PC-9 (cell line): ENCODE measurements at regions of chr2 and their contacts with region 1.

Region 1: DNA sequence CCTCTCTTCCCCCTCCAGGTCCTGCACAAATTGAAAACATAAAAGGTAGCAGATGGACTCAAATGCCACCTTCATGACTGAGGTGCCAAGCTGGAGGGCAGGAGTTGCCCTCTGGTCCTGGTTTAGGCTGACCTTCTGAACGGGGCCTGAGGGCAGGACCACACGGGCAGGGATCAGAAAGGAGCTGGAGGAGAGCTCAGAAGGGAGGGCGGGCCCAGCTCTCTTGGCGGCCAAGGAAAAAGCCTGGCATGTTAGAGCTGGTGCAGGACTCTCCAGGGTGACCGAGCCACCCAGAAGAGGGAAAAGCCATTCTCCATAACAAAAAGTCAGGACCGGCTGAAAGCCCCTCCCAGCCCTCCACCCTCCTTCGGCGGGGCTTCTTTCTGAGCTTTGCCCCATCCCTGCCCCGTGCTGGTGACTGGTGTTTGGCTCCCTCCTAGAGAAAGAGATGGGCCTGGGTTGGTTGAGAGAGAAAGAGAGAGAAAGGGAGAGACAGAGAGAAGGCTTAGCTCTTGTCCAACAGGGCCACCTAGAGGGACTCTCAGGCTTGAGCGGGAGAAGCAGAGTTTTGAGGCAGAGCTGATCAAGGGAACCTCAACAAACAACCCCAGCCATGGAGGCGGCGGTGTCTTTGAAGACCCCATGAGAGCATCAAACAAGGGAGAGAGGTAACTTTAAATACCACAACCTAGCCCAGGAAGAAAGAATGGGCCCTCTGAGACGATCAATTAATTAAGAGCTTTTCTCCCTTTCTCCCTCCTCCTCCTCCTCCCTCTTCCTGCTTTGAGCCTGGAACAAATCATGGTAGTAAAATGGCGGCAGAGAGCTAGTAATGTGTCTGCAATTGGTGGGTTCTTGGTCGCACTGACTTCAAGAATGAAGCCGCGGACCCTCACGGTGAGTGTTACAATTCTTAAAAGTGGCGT is 50.8 kb downstream of the WIPF1 start:
- DNase-seq: peak; percentile 74 to 79
- H3K4me3 ChIP-seq: peak overlapping the region; percentile 58
- H3K27ac ChIP-seq: no peak overlapping the region
- H3K4me1 ChIP-seq: 0 out of 2 replicates have a peak, but pooled peaks cover 4% of the 10 kb centered on the region
- H3K27me3 ChIP-seq: 0 out of 2 replicates have a peak, but pooled peaks cover 5% of the 10 kb centered on the region
- CTCF ChIP-seq: peak; percentile 80

Region 2: DNA sequence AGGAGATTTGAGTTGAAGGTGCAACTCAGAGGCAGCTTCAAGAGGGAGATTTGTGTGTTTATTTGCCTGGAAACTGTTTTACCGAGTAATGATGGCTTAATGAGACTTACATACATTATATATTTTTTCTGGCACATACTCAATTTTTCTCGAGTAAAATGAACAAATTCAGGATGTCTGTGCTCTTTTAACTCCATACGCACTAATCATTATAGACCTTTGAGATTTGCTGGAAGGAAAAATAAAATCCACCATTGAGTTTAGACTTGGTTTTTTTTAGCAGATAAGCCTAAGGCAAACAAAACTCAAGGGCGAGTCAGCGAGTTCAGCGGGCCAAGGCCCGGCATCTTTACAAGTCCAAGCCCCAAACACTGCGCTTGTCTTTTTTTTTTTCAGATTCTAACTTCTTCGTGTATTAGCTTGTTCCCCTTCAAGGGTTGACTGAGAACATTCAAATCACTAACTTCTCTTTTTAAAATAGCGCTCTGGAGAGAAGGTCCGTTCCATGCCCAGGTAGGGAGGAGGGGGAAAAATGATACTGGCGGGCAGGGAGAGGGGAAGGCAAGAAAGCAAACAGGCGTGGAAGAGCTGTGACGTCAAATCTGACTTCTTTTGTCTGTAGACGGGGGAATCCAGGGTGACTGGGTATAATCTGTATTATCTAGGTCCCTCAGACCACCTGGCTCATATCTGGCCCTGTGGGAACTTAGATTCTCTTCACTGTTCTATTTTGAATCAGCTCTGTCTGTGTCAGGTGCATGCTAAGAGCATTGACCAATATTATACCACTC is 1543.9 kb before region 1 on chr2:
- CTCF ChIA-PET with region 1: interaction called, 10 read pairs
- POLR2A ChIA-PET with region 1: interaction called, 6 read pairs
- intact Hi-C with region 1: no loop called
- DNase-seq: no peak
- H3K4me3 ChIP-seq: no peak overlapping the region
- H3K27ac ChIP-seq: no peak overlapping the region
- H3K4me1 ChIP-seq: peaks cover 49% of the 10 kb centered on the region
- H3K27me3 ChIP-seq: no peaks in the 10 kb centered on the region
- CTCF ChIP-seq: no peak

Region 3: GRCh38 chr2:174465327-174465726 is 81.5 kb before region 1 on chr2:
- CTCF ChIA-PET with region 1: interaction called, 89 read pairs
- POLR2A ChIA-PET with region 1: interaction called, 5 read pairs
- intact Hi-C with region 1: loop called (anchors 1 kb)
- DNase-seq: no peak
- H3K4me3 ChIP-seq: no peak overlapping the region
- H3K27ac ChIP-seq: no peak overlapping the region
- H3K4me1 ChIP-seq: no peaks in the 10 kb centered on the region
- H3K27me3 ChIP-seq: no peaks in the 10 kb centered on the region
- CTCF ChIP-seq: no peak

Region 4: GRCh38 chr2:174536304-174536703 is 10.5 kb before region 1 on chr2:
- CTCF ChIA-PET with region 1: no interaction called
- POLR2A ChIA-PET with region 1: interaction called, 15 read pairs
- intact Hi-C with region 1: no loop called
- DNase-seq: peak in 1 of 2 experiments; percentile 13
- H3K4me3 ChIP-seq: no peak overlapping the region
- H3K27ac ChIP-seq: no peak overlapping the region
- H3K4me1 ChIP-seq: no peaks in the 10 kb centered on the region
- H3K27me3 ChIP-seq: no peaks in the 10 kb centered on the region
- CTCF ChIP-seq: no peak

Region 5: GRCh38 chr2:175326801-175327200 is 780.0 kb after region 1 on chr2:
- CTCF ChIA-PET with region 1: interaction called, 12 read pairs
- POLR2A ChIA-PET with region 1: no interaction called
- intact Hi-C with region 1: no loop called
- DNase-seq: no peak
- H3K4me3 ChIP-seq: no peak overlapping the region
- H3K27ac ChIP-seq: no peak overlapping the region
- H3K4me1 ChIP-seq: no peaks in the 10 kb centered on the region
- H3K27me3 ChIP-seq: peaks cover 39% of the 10 kb centered on the region; the same call in 1 of the 2 replicates
- CTCF ChIP-seq: no peak

Region 6: GRCh38 chr2:175606010-175606841 is 1059.4 kb after region 1 on chr2:
- CTCF ChIA-PET with region 1: no interaction called
- POLR2A ChIA-PET with region 1: no interaction called
- intact Hi-C with region 1: no loop called
- DNase-seq: no peak
- H3K4me3 ChIP-seq: no peak overlapping the region
- H3K27ac ChIP-seq: no peak overlapping the region
- H3K4me1 ChIP-seq: no peaks in the 10 kb centered on the region
- H3K27me3 ChIP-seq: peaks cover 50% of the 10 kb centered on the region
- CTCF ChIP-seq: no peak